Activated B cell treated with CpG ODN at 0.5 μM for 24 hours (primary cell): ENCODE measurements at regions of chr20 and their contacts with region 1.

Region 1: GRCh38 chr20:37693635-37694626 is at the start of gene CTNNBL1:
- DNase-seq: peak; percentile 90
- ATAC-seq: peak; percentile 92
- H3K4me3 Mint-ChIP-seq: peak within 1 kb of the TSS; percentile 99
- H3K27ac Mint-ChIP-seq: peak within 1 kb of the TSS; percentile 95
- H3K4me1 Mint-ChIP-seq: peaks cover 43% of the 10 kb centered on the region
- H3K27me3 Mint-ChIP-seq: peaks cover 15% of the 10 kb centered on the region
- CTCF ChIP-seq: no peak
- total RNA-seq, gene CTNNBL1: 102 and 110 TPM in 2 replicates

Region 2: GRCh38 chr20:37651932-37652331 is 42.0 kb before region 1 on chr20:
- CTCF ChIA-PET with region 1: no interaction called
- POLR2A ChIA-PET with region 1: no interaction called
- intact Hi-C with region 1: no loop called
- DNase-seq: no peak
- ATAC-seq: peak; percentile 75
- H3K4me3 Mint-ChIP-seq: no peak overlapping the region
- H3K27ac Mint-ChIP-seq: no peak overlapping the region
- H3K4me1 Mint-ChIP-seq: no peaks in the 10 kb centered on the region
- H3K27me3 Mint-ChIP-seq: peaks cover 12% of the 10 kb centered on the region
- CTCF ChIP-seq: no peak

Region 3: GRCh38 chr20:37680420-37680819 is 13.5 kb before region 1 on chr20:
- CTCF ChIA-PET with region 1: no interaction called
- POLR2A ChIA-PET with region 1: no interaction called
- intact Hi-C with region 1: no loop called
- DNase-seq: no peak
- ATAC-seq: no peak
- H3K4me3 Mint-ChIP-seq: no peak overlapping the region
- H3K27ac Mint-ChIP-seq: no peak overlapping the region
- H3K4me1 Mint-ChIP-seq: no peaks in the 10 kb centered on the region
- H3K27me3 Mint-ChIP-seq: peaks cover 27% of the 10 kb centered on the region
- CTCF ChIP-seq: no peak

Region 4: GRCh38 chr20:37711987-37712964 is 18.3 kb after region 1 on chr20:
- CTCF ChIA-PET with region 1: no interaction called
- POLR2A ChIA-PET with region 1: interaction called, 11 read pairs
- intact Hi-C with region 1: no loop called
- DNase-seq: no peak
- ATAC-seq: no peak
- H3K4me3 Mint-ChIP-seq: no peak overlapping the region
- H3K27ac Mint-ChIP-seq: no peak overlapping the region
- H3K4me1 Mint-ChIP-seq: peaks cover 35% of the 10 kb centered on the region
- H3K27me3 Mint-ChIP-seq: no peaks in the 10 kb centered on the region
- CTCF ChIP-seq: no peak

Region 5: GRCh38 chr20:37789408-37789807 is 95.5 kb after region 1 on chr20:
- CTCF ChIA-PET with region 1: no interaction called
- POLR2A ChIA-PET with region 1: no interaction called
- intact Hi-C with region 1: loop called (anchors 1 kb)
- DNase-seq: no peak
- ATAC-seq: peak; percentile 97
- H3K4me3 Mint-ChIP-seq: peak overlapping the region; percentile 17
- H3K27ac Mint-ChIP-seq: peak overlapping the region; percentile 67
- H3K4me1 Mint-ChIP-seq: peaks cover 32% of the 10 kb centered on the region
- H3K27me3 Mint-ChIP-seq: no peaks in the 10 kb centered on the region
- CTCF ChIP-seq: no peak

Region 6: GRCh38 chr20:37804584-37805566 is 110.9 kb after region 1 on chr20:
- CTCF ChIA-PET with region 1: no interaction called
- POLR2A ChIA-PET with region 1: interaction called, 12 read pairs
- intact Hi-C with region 1: loop called (anchors 1 kb)
- DNase-seq: peak; percentile 56
- ATAC-seq: peak; percentile 81
- H3K4me3 Mint-ChIP-seq: peak overlapping the region; percentile 79
- H3K27ac Mint-ChIP-seq: peak overlapping the region; percentile 97
- H3K4me1 Mint-ChIP-seq: peaks cover 1% of the 10 kb centered on the region
- H3K27me3 Mint-ChIP-seq: no peaks in the 10 kb centered on the region
- CTCF ChIP-seq: no peak

Region 7: GRCh38 chr20:38033310-38034107 is 339.6 kb after region 1 on chr20 and contains the starts of genes RPRD1B and TTI1:
- CTCF ChIA-PET with region 1: no interaction called
- POLR2A ChIA-PET with region 1: no interaction called
- intact Hi-C with region 1: loop called (anchors 1 kb)
- DNase-seq: peak; percentile 89
- ATAC-seq: peak; percentile 87
- H3K4me3 Mint-ChIP-seq: peak within 1 kb of the TSS; percentile 92
- H3K27ac Mint-ChIP-seq: peak within 1 kb of the TSS; percentile 96
- H3K4me1 Mint-ChIP-seq: peaks cover 67% of the 10 kb centered on the region
- H3K27me3 Mint-ChIP-seq: no peaks in the 10 kb centered on the region
- CTCF ChIP-seq: no peak
- total RNA-seq, gene RPRD1B: 38.4 and 40.8 TPM in 2 replicates
- total RNA-seq, gene TTI1: 27.1 and 30.1 TPM in 2 replicates